ENCODE measurements at regions of chr5 and their contacts with region 1.

Region 1: DNA sequence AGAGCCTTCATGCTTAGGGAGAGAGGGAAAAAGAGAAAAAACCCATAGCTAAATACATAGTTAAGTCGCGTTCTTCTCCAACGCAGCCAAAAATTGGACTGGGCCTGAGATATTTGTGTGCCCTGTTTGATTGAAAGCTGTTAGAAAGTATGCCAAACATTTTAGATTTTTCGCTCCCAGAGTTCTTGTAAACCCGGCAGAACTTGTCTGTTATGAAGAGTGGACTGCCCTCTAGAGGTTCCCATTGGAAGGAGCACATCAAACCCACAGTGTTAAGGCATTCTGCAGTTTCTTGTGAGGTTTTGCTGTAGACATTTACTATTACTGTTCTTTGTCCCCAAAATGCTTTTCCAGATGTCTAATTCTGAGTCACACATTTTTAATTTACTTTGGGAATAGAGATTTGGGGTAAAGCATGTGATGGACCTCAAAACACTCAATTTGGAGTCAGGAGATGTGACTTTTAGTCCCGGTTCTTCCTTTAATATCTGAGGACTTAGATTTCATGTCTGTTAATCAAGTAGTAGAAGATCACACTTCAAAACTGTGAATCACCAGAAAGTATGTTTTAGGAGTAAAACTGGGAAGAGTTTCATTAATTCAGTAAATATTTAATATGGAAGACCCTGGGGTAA is 96.6 kb downstream of the PCSK1 start:
- DNase-seq: peak; percentile 75
- ATAC-seq: peak; percentile 78
- H3K4me3 ChIP-seq: no peak overlapping the region
- H3K4me3 Mint-ChIP-seq: no peak overlapping the region
- H3K27ac ChIP-seq: no peak overlapping the region
- H3K27ac Mint-ChIP-seq: no peak overlapping the region
- H3K4me1 ChIP-seq: peaks cover 0 to 4% of the 10 kb centered on the region in 2 donors
- H3K4me1 Mint-ChIP-seq: no peaks in the 10 kb centered on the region
- H3K27me3 ChIP-seq: no peaks in the 10 kb centered on the region
- H3K27me3 Mint-ChIP-seq: peaks cover 15% of the 10 kb centered on the region
- CTCF ChIP-seq: peak; percentile 88

Region 2: GRCh38 chr5:95664204-95664786 is 672.2 kb before region 1 on chr5:
- CTCF ChIA-PET with region 1: interaction called, 3 read pairs
- POLR2A ChIA-PET with region 1: no interaction called
- intact Hi-C with region 1: loop called (anchors 5 kb)
- DNase-seq: peak; percentile 56
- ATAC-seq: no peak
- H3K4me3 ChIP-seq: no peak overlapping the region
- H3K4me3 Mint-ChIP-seq: no peak overlapping the region
- H3K27ac ChIP-seq: no peak overlapping the region
- H3K27ac Mint-ChIP-seq: no peak overlapping the region
- H3K4me1 ChIP-seq: no peaks in the 10 kb centered on the region
- H3K4me1 Mint-ChIP-seq: no peaks in the 10 kb centered on the region
- H3K27me3 ChIP-seq: no peaks in the 10 kb centered on the region
- H3K27me3 Mint-ChIP-seq: no peaks in the 10 kb centered on the region
- CTCF ChIP-seq: peak; percentile 95

Region 3: GRCh38 chr5:95846554-95847260 is 489.8 kb before region 1 on chr5:
- CTCF ChIA-PET with region 1: interaction called, 13 read pairs
- POLR2A ChIA-PET with region 1: no interaction called
- intact Hi-C with region 1: no loop called
- DNase-seq: peak; percentile 82
- ATAC-seq: peak; percentile 77
- H3K4me3 ChIP-seq: no peak overlapping the region
- H3K4me3 Mint-ChIP-seq: no peak overlapping the region
- H3K27ac ChIP-seq: no peak overlapping the region
- H3K27ac Mint-ChIP-seq: peak overlapping the region; percentile 46
- H3K4me1 ChIP-seq: peaks cover 9 to 10% of the 10 kb centered on the region in 2 donors
- H3K4me1 Mint-ChIP-seq: peaks cover 12% of the 10 kb centered on the region
- H3K27me3 ChIP-seq: no peaks in the 10 kb centered on the region
- H3K27me3 Mint-ChIP-seq: no peaks in the 10 kb centered on the region
- CTCF ChIP-seq: peak; percentile 95

Region 4: DNA sequence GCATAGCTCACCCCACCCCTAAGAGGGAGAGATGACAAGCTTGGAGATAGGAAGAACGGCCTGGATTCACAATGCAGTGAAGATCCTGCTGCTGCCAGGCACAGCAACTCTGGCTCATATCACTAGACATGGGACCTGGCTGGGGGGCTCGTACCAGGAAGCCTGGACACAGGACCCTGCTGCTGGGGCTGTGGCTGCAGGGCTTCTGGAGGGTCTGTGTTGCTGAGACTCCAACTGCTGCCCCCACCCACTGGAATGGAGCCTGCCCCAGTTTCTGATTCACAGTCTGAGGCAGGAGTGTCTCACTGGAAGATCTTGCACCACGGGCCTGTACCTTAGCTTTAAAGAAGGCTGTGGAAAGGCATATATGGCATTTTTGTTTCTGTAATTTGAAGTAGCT is 483.0 kb before region 1 on chr5:
- CTCF ChIA-PET with region 1: interaction called, 151 read pairs
- POLR2A ChIA-PET with region 1: no interaction called
- intact Hi-C with region 1: loop called (anchors 1 kb)
- DNase-seq: no peak
- ATAC-seq: no peak
- H3K4me3 ChIP-seq: no peak overlapping the region
- H3K4me3 Mint-ChIP-seq: no peak overlapping the region
- H3K27ac ChIP-seq: no peak overlapping the region
- H3K27ac Mint-ChIP-seq: no peak overlapping the region
- H3K4me1 ChIP-seq: peaks cover 0 to under 1% of the 10 kb centered on the region in 2 donors
- H3K4me1 Mint-ChIP-seq: peaks cover 4% of the 10 kb centered on the region
- H3K27me3 ChIP-seq: no peaks in the 10 kb centered on the region
- H3K27me3 Mint-ChIP-seq: no peaks in the 10 kb centered on the region
- CTCF ChIP-seq: no peak

Region 5: GRCh38 chr5:95858661-95859326 is 477.7 kb before region 1 on chr5:
- CTCF ChIA-PET with region 1: interaction called, 151 read pairs
- POLR2A ChIA-PET with region 1: no interaction called
- intact Hi-C with region 1: loop called (anchors 1 kb)
- DNase-seq: peak; percentile 89
- ATAC-seq: peak; percentile 94
- H3K4me3 ChIP-seq: peak overlapping the region in 3 of 5 experiments; percentile 7 to 25 (median 18)
- H3K4me3 Mint-ChIP-seq: peak overlapping the region; percentile 76
- H3K27ac ChIP-seq: no peak overlapping the region
- H3K27ac Mint-ChIP-seq: no peak overlapping the region
- H3K4me1 ChIP-seq: peaks cover 15 to 18% of the 10 kb centered on the region in 2 donors
- H3K4me1 Mint-ChIP-seq: peaks cover 30% of the 10 kb centered on the region
- H3K27me3 ChIP-seq: peaks cover 0 to 6% (median 1%) of the 10 kb centered on the region in 4 experiments
- H3K27me3 Mint-ChIP-seq: peaks cover 11% of the 10 kb centered on the region
- CTCF ChIP-seq: peak; percentile 97

Region 6: GRCh38 chr5:95892780-95893354 is 443.6 kb before region 1 on chr5:
- CTCF ChIA-PET with region 1: interaction called, 5 read pairs
- POLR2A ChIA-PET with region 1: no interaction called
- intact Hi-C with region 1: loop called (anchors 1 kb)
- DNase-seq: peak; percentile 39
- ATAC-seq: peak; percentile 31
- H3K4me3 ChIP-seq: no peak overlapping the region
- H3K4me3 Mint-ChIP-seq: no peak overlapping the region
- H3K27ac ChIP-seq: no peak overlapping the region
- H3K27ac Mint-ChIP-seq: no peak overlapping the region
- H3K4me1 ChIP-seq: no peaks in the 10 kb centered on the region
- H3K4me1 Mint-ChIP-seq: no peaks in the 10 kb centered on the region
- H3K27me3 ChIP-seq: no peaks in the 10 kb centered on the region
- H3K27me3 Mint-ChIP-seq: no peaks in the 10 kb centered on the region
- CTCF ChIP-seq: peak; percentile 28

Region 7: DNA sequence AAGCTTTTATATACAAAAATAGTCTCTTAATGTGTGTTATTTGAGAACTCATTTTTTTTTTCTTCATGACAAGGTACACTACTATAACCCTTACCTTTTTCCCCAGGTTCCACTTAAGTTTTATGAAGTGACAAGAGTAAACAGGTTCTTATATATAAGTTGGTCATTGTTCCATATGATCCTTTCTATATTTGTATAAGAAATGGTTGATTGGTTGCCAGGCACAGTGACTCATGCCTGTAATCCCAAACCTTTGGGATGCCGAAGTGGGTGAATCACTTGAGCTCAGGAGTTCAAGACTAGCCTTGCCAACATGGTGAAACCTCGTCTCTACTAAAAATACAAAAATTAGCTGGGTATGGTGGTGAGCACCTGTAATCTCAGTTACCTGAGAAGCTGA is 11.8 kb before region 1 on chr5:
- CTCF ChIA-PET with region 1: interaction called, 10 read pairs
- POLR2A ChIA-PET with region 1: no interaction called
- intact Hi-C with region 1: no loop called
- DNase-seq: no peak
- ATAC-seq: no peak
- H3K4me3 ChIP-seq: no peak overlapping the region
- H3K4me3 Mint-ChIP-seq: no peak overlapping the region
- H3K27ac ChIP-seq: no peak overlapping the region
- H3K27ac Mint-ChIP-seq: no peak overlapping the region
- H3K4me1 ChIP-seq: no peaks in the 10 kb centered on the region
- H3K4me1 Mint-ChIP-seq: no peaks in the 10 kb centered on the region
- H3K27me3 ChIP-seq: peaks cover 0 to 5% (median 0%) of the 10 kb centered on the region in 4 experiments
- H3K27me3 Mint-ChIP-seq: peaks cover 17% of the 10 kb centered on the region
- CTCF ChIP-seq: no peak

Region 8: GRCh38 chr5:96370976-96371375 is 34.5 kb after region 1 on chr5:
- CTCF ChIA-PET with region 1: no interaction called
- POLR2A ChIA-PET with region 1: no interaction called
- intact Hi-C with region 1: no loop called
- DNase-seq: no peak
- ATAC-seq: no peak
- H3K4me3 ChIP-seq: no peak overlapping the region
- H3K4me3 Mint-ChIP-seq: no peak overlapping the region
- H3K27ac ChIP-seq: no peak overlapping the region
- H3K27ac Mint-ChIP-seq: no peak overlapping the region
- H3K4me1 ChIP-seq: no peaks in the 10 kb centered on the region
- H3K4me1 Mint-ChIP-seq: no peaks in the 10 kb centered on the region
- H3K27me3 ChIP-seq: peaks cover 0 to 9% (median 1%) of the 10 kb centered on the region in 4 experiments
- H3K27me3 Mint-ChIP-seq: peaks cover 40% of the 10 kb centered on the region
- CTCF ChIP-seq: no peak